ENCODE measurements at regions of chr1 and their contacts with region 1.

Region 1: GRCh38 chr1:109099938-109100773 is 9.6 kb downstream of the TMEM167B start:
- DNase-seq: peak; percentile 89 to 99 (median 96)
- ATAC-seq: peak; percentile 87 to 90
- H3K4me3 Mint-ChIP-seq: peak overlapping the region; percentile 91 to 99 (median 96)
- H3K27ac Mint-ChIP-seq: peak overlapping the region; percentile 96 to 99 (median 98)
- H3K4me1 Mint-ChIP-seq: peaks cover 6 to 30% (median 14%) of the 10 kb centered on the region in 4 donors
- H3K27me3 Mint-ChIP-seq: peaks cover 0 to 3% (median 0%) of the 10 kb centered on the region in 5 donors

Region 2: DNA sequence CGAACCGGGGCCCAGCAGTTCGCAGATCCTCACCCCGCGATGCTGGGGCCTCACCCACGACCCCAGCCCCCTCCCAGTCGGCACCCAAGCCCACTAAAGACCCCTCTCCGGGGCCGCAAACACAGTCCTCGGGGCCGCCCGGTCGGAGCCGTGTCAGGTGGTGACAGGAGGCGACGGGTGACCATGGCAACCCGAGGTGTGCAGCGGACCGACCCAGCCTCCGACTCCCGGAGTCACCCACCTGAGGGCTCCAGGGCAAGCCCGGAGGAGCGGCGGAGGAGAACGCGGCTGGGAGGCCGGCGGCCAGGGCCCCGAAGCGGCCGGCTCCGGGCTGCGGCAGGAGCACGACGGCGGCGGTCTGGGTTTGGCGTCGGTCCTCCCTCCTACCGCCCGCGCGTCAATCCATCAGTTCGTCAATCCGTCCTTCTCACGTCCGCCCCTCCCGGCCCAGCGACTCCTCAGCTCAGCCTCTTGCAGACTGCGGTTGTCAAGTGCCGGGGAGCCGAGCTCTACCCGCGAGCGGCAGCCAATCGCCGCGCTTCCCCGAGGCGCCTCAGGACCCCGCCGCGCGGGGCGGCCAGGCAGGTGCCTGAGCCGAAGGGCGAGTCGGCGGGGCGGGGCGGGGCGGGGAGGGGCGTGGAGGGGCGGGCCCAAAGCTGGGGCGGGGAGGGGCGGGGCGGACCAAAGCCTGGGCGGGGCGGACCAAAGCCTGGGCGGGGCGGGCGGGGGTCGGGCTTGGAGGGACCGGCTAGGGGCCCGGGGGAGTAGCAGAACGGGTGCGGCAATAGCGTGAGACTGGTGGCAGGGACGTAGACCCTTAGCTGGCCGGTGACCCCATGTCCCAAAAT is 58.3 kb before region 1 on chr1 and contains the start of gene WDR47:
- POLR2A ChIA-PET with region 1: interaction called, 34 read pairs
- DNase-seq: peak; percentile 92 to 98 (median 96)
- ATAC-seq: peak; percentile 95 to 96
- H3K4me3 Mint-ChIP-seq: peak within 1 kb of the TSS; percentile 84 to 98 (median 94)
- H3K27ac Mint-ChIP-seq: peak within 1 kb of the TSS; percentile 80 to 97 (median 94)
- H3K4me1 Mint-ChIP-seq: peaks cover 6 to 20% (median 14%) of the 10 kb centered on the region in 4 donors
- H3K27me3 Mint-ChIP-seq: peaks cover 0 to 6% (median 0%) of the 10 kb centered on the region in 5 donors
- polyA plus RNA-seq, gene WDR47: 3.0 to 6.1 (median 5.7) TPM

Region 3: GRCh38 chr1:109112652-109113285 is 12.6 kb after region 1 on chr1:
- POLR2A ChIA-PET with region 1: interaction called, 73 read pairs
- DNase-seq: peak; percentile 80 to 95 (median 88)
- ATAC-seq: peak; percentile 55 to 61
- H3K4me3 Mint-ChIP-seq: peak overlapping the region; percentile 86 to 98 (median 89)
- H3K27ac Mint-ChIP-seq: peak overlapping the region; percentile 79 to 100 (median 94)
- H3K4me1 Mint-ChIP-seq: peaks cover 22 to 43% (median 36%) of the 10 kb centered on the region in 4 donors
- H3K27me3 Mint-ChIP-seq: peaks cover 0 to 11% (median 0%) of the 10 kb centered on the region in 5 donors

Region 4: DNA sequence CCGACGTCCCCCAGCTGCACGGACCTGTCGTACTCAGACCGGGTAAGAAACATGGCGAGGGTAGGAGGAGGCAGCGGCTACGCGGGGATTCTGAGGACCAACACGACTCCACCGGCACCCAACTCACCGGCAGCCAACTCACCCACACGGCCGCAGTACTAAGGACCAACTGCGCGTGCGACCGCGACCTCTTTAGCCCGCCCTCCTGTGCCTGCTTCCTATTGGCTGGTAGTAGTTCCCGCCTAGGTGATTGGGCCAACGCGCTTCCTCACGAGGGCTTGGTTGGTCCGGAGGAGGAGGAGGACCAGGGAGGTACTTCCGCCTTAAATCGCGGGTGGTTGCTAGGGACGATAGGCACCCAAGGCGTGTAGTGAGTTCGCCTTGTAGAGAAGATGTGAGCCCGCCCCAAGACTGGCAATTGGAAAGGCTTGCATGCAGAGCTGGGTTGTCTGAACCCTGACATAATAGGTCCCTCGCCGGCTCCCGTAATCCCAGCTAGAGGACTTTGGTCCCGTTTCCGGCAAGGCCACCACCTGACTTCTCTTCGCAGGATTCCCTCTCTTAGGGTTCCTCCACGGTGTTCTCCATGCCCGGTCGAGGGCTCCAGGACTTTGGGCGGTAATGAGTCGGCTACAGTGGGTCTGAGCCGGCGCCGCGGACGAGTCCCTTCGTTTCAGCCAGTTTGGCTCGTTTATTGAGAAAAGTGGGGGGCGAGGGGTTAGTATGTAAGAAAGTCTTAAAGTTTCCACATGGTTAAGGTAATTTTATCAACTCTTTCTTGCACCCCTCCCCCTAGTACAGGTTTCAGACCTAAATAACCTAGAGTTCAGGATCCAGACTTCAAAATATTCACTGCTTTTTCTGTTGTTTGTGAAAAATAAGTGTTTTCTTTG is 326.4 kb after region 1 on chr1 and contains the start of gene PSMA5:
- POLR2A ChIA-PET with region 1: interaction called, 10 read pairs
- DNase-seq: peak; percentile 78 to 98 (median 94)
- ATAC-seq: peak; percentile 91 to 92
- H3K4me3 Mint-ChIP-seq: peak within 1 kb of the TSS; percentile 94 to 99 (median 97)
- H3K27ac Mint-ChIP-seq: peak within 1 kb of the TSS; percentile 77 to 99 (median 98)
- H3K4me1 Mint-ChIP-seq: peaks cover 24 to 43% (median 40%) of the 10 kb centered on the region in 4 donors
- H3K27me3 Mint-ChIP-seq: no peaks in the 10 kb centered on the region
- polyA plus RNA-seq, gene PSMA5: 73.8 to 93.9 (median 84.6) TPM